Heart left ventricle (tissue), 16 donors: ENCODE measurements at regions of chr9 and their contacts with region 1.

Region 1: DNA sequence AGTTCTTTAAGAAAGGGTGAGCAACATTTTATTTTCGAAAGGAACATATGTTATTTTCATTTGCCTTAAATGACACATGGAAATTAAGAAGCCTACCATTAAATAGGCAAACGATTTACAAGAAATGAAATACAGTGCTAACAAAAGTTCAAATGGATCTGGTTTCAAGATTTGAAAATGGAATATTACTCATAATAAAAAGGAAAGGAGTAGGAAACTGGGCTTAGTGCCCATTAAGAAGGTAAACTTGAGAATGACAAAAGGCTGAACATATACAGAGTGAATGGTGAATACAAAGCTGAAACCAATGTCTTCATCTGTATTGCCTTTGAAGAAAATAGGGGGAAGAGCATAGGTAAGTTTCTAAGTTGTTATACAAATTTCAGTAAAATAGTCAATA is 974.2 kb upstream of the C9orf72 start:
- DNase-seq: no peak
- ATAC-seq: no peak
- H3K4me3 ChIP-seq: no peak overlapping the region
- H3K27ac ChIP-seq: no peak overlapping the region
- H3K4me1 ChIP-seq: no peaks in the 10 kb centered on the region
- H3K27me3 ChIP-seq: no peaks in the 10 kb centered on the region
- CTCF ChIP-seq: no peak
- POLR2A ChIP-seq: no peak

Region 2: DNA sequence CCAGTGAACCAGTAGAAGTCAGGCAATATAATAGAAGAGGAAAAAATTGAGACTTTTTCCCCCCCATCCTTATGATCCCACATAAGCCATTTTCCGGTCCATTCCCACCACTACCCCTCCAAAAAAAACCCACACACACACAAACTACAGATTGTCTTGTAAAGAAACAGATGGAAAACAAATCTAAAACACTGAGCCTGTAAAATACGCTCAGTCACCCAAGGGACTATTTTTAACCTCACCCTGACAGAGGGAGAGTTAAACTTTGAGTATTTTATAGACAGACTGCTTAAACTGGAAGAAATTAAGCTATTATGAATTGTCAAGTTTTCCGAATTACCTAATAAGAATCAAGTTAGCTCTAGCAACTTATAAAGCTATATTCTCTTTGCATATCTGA is 502.5 kb before region 1 on chr9:
- intact Hi-C with region 1: no loop called
- DNase-seq: no peak
- ATAC-seq: no peak
- H3K4me3 ChIP-seq: no peak overlapping the region
- H3K27ac ChIP-seq: no peak overlapping the region
- H3K4me1 ChIP-seq: no peaks in the 10 kb centered on the region
- H3K27me3 ChIP-seq: no peaks in the 10 kb centered on the region
- CTCF ChIP-seq: no peak
- POLR2A ChIP-seq: no peak

Region 3: GRCh38 chr9:28583832-28584231 is 36.3 kb after region 1 on chr9:
- intact Hi-C with region 1: no loop called
- DNase-seq: no peak
- ATAC-seq: no peak
- H3K4me3 ChIP-seq: no peak overlapping the region
- H3K27ac ChIP-seq: no peak overlapping the region
- H3K4me1 ChIP-seq: no peaks in the 10 kb centered on the region
- H3K27me3 ChIP-seq: no peaks in the 10 kb centered on the region
- CTCF ChIP-seq: no peak
- POLR2A ChIP-seq: no peak

Region 4: DNA sequence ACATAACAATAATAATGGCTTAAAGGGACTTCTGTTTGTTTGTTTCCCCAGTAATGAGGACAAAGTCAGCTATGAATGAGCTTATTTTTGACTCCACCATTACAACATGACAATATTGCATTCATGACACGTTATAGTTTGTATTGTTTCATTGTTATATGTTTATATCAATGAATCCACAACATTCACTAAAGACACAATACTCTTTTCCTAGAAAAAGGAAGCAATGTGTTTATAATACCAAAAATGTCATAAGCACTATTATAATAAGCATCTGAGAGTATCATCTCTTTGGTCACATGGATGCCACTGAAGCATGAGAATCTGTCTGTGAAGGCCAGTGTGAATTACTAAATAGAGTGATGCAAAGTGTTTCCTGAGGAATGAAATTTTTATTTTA is 52.7 kb after region 1 on chr9:
- intact Hi-C with region 1: loop called in 1 of 10 experiments (anchors 5 kb)
- DNase-seq: no peak
- ATAC-seq: no peak
- H3K4me3 ChIP-seq: no peak overlapping the region
- H3K27ac ChIP-seq: no peak overlapping the region
- H3K4me1 ChIP-seq: no peaks in the 10 kb centered on the region
- H3K27me3 ChIP-seq: no peaks in the 10 kb centered on the region
- CTCF ChIP-seq: no peak
- POLR2A ChIP-seq: no peak